ENCODE measurements at regions of chr1 and their contacts with region 1.

Region 1: GRCh38 chr1:36516372-36517325 is 33.9 kb upstream of the CSF3R start:
- DNase-seq: peak; percentile 65 to 79
- ATAC-seq: peak; percentile 73 to 92; a peak in 5 of 6 replicates
- H3K4me3 ChIP-seq: no peak overlapping the region
- H3K27ac ChIP-seq: no peak overlapping the region; a peak in 1 of 6 replicates
- H3K4me1 ChIP-seq: no peaks in the 10 kb centered on the region
- CTCF ChIP-seq: peak; percentile 67
- EP300 ChIP-seq: no peak
- POLR2A ChIP-seq: no peak
- RAD21 ChIP-seq: peak; percentile 72 to 81

Region 2: GRCh38 chr1:36475910-36476604 is 40.6 kb before region 1 on chr1:
- CTCF ChIA-PET with region 1: no interaction called
- POLR2A ChIA-PET with region 1: no interaction called
- DNase-seq: no peak
- ATAC-seq: no peak
- H3K4me3 ChIP-seq: no peak overlapping the region
- H3K27ac ChIP-seq: no peak overlapping the region
- H3K4me1 ChIP-seq: no peaks in the 10 kb centered on the region
- CTCF ChIP-seq: no peak
- EP300 ChIP-seq: no peak
- POLR2A ChIP-seq: no peak
- RAD21 ChIP-seq: no peak

Region 3: DNA sequence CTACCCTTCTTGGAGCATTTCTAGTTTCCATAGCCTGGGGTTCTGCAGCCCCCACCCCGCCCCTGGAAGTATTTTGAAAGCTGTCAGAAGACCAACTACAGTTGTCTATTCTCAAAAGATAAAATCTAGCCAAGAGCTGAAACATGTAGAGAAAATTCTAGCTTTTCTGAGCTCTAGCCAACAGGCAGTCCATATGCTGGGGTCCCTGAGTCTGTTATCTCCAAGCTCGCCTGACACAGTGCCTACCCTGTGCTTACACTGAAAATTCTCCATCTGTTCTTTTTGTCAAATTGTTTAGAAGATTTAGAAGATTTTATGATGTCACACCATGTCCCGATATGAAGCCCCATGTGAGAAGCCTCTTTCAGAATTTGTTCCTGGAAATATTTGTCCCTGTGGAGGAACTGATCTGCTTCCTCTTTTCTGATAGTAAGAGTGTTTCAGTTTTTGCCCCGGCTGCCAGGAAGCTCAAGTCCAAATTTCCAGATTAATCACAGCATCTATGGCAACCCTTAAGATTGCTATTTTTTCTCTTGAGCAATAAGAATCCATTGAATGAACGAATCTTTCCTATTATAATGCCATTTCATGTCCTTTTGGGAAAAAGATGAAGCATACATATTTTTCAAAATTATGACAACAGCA is 10.3 kb before region 1 on chr1:
- CTCF ChIA-PET with region 1: interaction called, 29 read pairs
- POLR2A ChIA-PET with region 1: no interaction called
- DNase-seq: no peak
- ATAC-seq: no peak
- H3K4me3 ChIP-seq: no peak overlapping the region
- H3K27ac ChIP-seq: no peak overlapping the region
- H3K4me1 ChIP-seq: 0 out of 3 replicates have a peak, but pooled peaks cover 2% of the 10 kb centered on the region
- CTCF ChIP-seq: no peak
- EP300 ChIP-seq: no peak
- POLR2A ChIP-seq: no peak
- RAD21 ChIP-seq: no peak

Region 4: GRCh38 chr1:36528361-36529349 is 12.0 kb after region 1 on chr1:
- CTCF ChIA-PET with region 1: interaction called, 40 read pairs
- POLR2A ChIA-PET with region 1: no interaction called
- DNase-seq: peak in 1 of 2 experiments; percentile 16
- ATAC-seq: peak; percentile 54 to 79; a peak in 3 of 6 replicates
- H3K4me3 ChIP-seq: no peak overlapping the region
- H3K27ac ChIP-seq: no peak overlapping the region
- H3K4me1 ChIP-seq: no peaks in the 10 kb centered on the region
- CTCF ChIP-seq: no peak; the same call in 2 of the 3 replicates
- EP300 ChIP-seq: no peak
- POLR2A ChIP-seq: no peak
- RAD21 ChIP-seq: no peak

Region 5: GRCh38 chr1:37434292-37434907 is 917.8 kb after region 1 on chr1:
- CTCF ChIA-PET with region 1: interaction called, 14 read pairs
- POLR2A ChIA-PET with region 1: no interaction called
- DNase-seq: peak; percentile 50 to 77
- ATAC-seq: peak; percentile 77 to 95
- H3K4me3 ChIP-seq: no peak overlapping the region
- H3K27ac ChIP-seq: no peak overlapping the region; a peak in 1 of 6 replicates
- H3K4me1 ChIP-seq: no peaks in the 10 kb centered on the region
- CTCF ChIP-seq: peak; percentile 64
- EP300 ChIP-seq: no peak
- POLR2A ChIP-seq: no peak
- RAD21 ChIP-seq: peak; percentile 79 to 84